ENCODE measurements at regions of chr5 and their contacts with region 1.

Region 1: DNA sequence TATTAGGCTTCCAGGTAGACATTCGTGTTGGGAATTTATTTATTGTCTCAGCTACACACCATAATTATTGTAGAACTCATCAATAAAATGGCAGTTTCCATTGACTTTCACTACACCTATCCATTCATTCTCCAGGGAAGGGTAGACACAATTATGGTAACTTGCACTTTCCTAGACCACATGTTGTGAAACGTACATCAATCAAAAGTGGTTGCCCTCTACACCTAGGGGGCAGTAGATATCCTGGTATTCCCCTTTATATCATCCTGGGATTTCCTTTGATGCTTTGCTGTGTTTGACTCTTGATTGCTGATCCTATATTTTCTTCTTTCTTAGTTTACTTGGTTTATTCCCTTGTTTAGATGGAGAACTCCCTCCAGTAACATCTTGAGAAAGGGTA is 47.9 kb downstream of the ADGRV1 start:
- H3K4me3 ChIP-seq: no peak overlapping the region
- H3K27ac ChIP-seq: no peak overlapping the region
- H3K4me1 ChIP-seq: peaks cover 4% of the 10 kb centered on the region; the same call in 1 of the 2 replicates
- CTCF ChIP-seq: no peak

Region 2: DNA sequence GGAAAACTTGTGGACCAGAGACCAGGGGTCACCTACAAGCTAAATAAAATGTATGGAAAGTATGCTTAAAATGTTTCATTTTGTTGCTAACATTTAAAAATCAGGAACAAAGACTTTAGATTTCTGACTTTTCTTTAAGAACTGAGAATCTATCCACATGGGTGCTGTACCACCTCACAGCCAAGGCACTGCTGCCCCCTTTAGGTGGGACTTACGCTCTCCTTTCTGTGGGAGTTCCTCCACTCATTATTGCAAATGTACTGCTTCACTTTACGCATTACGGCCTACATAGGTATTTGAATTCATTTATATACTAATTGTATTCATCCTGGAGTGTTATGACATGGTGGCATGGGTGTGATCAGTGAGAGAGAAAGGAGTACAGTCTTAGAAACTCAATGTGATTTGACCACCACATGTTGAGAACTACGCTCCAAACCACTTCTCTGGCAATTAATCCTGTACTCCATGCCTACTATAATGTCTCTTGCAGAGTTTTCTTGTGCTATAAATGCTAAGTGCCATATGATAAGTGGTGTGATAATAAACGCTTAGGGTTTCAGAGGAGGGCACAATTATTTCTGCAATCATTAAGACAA is 172.3 kb before region 1 on chr5:
- CTCF ChIA-PET with region 1: interaction called, 10 read pairs
- POLR2A ChIA-PET with region 1: no interaction called
- H3K4me3 ChIP-seq: no peak overlapping the region
- H3K27ac ChIP-seq: no peak overlapping the region
- H3K4me1 ChIP-seq: peaks cover 10% of the 10 kb centered on the region
- CTCF ChIP-seq: no peak

Region 3: GRCh38 chr5:90503596-90503995 is 102.9 kb before region 1 on chr5:
- CTCF ChIA-PET with region 1: no interaction called
- POLR2A ChIA-PET with region 1: no interaction called
- H3K4me3 ChIP-seq: no peak overlapping the region
- H3K27ac ChIP-seq: no peak overlapping the region
- H3K4me1 ChIP-seq: no peaks in the 10 kb centered on the region
- CTCF ChIP-seq: no peak

Region 4: DNA sequence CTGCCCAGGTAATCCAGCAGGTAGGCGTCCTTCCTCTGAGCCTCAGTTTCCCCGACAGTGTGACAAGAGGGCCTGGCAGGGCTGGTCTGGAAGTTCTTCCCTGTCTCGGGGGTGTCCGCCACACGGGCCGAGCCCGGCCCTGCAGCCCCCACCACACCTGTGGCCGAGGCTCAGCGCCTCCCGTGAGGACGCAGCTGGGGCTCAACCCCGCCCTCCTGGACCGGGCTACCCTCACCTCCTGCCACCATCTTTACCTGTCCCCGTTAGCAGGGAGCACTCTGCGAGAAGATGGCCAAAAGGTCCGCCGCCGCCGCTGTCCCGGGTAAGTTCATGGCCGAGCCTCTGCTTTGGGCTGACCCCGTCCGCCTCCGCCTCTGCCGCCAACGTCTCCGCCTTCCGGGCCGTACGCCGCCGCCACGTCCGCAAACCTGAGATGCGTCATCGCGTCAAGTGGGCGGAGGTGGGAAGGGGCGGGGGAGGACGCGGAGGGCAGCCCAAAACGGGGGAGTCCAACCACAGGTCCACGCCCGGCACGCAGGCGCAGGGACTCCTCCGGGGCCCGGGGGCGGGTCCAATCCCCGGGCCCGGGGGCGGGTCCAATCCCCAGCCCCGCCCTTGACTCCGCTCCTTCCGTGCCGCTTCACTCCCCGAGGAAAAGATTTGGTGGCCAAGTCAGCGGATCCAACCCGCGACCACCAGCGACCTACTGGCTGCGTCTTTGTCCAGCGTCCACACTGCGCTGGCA is 77.2 kb before region 1 on chr5 and contains the start of gene LYSMD3:
- CTCF ChIA-PET with region 1: interaction called, 18 read pairs
- POLR2A ChIA-PET with region 1: no interaction called
- H3K4me3 ChIP-seq: peak within 1 kb of the TSS; percentile 95
- H3K27ac ChIP-seq: peak within 1 kb of the TSS; percentile 87
- H3K4me1 ChIP-seq: no peaks in the 10 kb centered on the region
- CTCF ChIP-seq: no peak

Region 5: DNA sequence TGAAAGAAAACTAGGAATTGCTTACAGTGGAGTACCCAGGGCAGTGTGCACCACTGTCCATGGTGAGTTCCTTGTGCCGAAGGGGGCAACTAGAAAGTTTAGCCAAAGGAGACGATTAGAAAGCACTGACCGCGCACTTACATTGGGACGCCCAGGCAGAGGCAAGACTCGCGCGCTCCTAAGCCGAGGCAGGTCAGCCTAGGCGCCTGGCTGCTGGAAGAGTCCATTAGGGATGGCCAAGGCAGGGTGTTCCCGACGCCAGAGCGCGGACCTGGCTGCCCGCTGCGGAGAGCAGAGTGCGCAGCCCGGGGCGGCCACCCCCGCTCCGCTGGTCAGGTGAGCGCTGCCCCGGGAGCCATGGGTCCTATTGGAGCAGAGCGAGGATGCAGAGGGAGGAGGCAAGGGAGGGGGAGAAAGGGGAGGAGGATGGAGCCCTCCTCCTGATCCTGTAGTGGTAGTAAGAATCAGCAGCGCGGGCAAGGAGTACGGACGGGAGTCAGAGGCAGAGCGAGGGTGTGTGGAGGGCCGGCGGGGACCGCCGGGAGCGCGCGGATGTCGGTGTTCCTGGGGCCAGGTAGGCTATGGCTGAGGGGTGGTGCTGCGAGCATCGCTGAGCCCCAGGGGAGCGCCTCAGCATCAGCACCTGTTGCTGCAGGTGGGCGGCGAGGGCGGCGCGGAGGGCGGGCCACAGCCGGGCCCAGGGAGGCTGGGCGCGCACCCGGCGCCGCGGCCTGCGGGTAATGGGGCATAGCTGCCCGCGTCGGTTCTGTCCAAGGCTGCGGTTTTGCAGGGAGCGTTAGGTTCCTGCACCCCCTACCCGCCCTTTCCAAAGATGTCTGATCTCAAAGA is 48.0 kb before region 1 on chr5 and contains the start of gene ADGRV1:
- CTCF ChIA-PET with region 1: interaction called, 11 read pairs
- POLR2A ChIA-PET with region 1: no interaction called
- H3K4me3 ChIP-seq: peak within 1 kb of the TSS; percentile 98
- H3K27ac ChIP-seq: peak within 1 kb of the TSS; percentile 92
- H3K4me1 ChIP-seq: peaks cover 36% of the 10 kb centered on the region
- CTCF ChIP-seq: 0 out of 2 replicates have a peak, but pooled peaks have one; percentile 34

Region 6: DNA sequence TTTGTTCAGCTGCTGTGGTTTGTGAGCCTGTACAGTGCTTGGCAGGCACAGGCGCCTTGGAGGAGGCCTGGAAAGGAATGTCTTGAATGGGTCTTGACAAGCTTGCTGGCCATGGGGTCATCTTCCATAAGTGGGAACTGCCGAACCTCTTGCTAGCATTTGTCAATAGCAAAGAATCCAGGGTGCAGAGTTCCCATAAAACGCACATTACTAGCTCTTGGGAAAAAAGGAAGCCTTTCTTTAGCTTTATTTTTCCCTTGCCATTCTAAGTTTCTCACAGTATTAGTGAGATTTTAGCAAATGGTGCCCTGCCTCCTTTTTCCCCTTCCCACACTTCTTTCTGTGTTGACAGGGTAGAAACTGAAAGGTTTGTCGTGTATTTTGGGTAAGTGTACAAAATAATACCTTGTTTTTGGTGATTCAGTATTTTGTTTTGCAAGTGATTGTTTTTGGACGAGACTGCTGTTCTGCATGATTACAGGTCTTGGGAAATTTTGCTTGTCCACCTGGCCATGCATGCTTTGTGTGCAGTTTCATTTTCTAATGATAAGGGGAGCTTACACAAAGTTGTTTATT is 34.0 kb after region 1 on chr5:
- CTCF ChIA-PET with region 1: no interaction called
- POLR2A ChIA-PET with region 1: no interaction called
- H3K4me3 ChIP-seq: no peak overlapping the region
- H3K27ac ChIP-seq: no peak overlapping the region
- H3K4me1 ChIP-seq: no peaks in the 10 kb centered on the region
- CTCF ChIP-seq: no peak

Region 7: GRCh38 chr5:90783460-90784333 is 177.2 kb after region 1 on chr5:
- CTCF ChIA-PET with region 1: interaction called, 20 read pairs
- POLR2A ChIA-PET with region 1: no interaction called
- H3K4me3 ChIP-seq: no peak overlapping the region
- H3K27ac ChIP-seq: no peak overlapping the region
- H3K4me1 ChIP-seq: no peaks in the 10 kb centered on the region
- CTCF ChIP-seq: peak; percentile 66

Measured in HEK293 (cell line).